Motor neuron (in vitro differentiated cells): ENCODE measurements at regions of chr17 and their contacts with region 1.

Region 1: DNA sequence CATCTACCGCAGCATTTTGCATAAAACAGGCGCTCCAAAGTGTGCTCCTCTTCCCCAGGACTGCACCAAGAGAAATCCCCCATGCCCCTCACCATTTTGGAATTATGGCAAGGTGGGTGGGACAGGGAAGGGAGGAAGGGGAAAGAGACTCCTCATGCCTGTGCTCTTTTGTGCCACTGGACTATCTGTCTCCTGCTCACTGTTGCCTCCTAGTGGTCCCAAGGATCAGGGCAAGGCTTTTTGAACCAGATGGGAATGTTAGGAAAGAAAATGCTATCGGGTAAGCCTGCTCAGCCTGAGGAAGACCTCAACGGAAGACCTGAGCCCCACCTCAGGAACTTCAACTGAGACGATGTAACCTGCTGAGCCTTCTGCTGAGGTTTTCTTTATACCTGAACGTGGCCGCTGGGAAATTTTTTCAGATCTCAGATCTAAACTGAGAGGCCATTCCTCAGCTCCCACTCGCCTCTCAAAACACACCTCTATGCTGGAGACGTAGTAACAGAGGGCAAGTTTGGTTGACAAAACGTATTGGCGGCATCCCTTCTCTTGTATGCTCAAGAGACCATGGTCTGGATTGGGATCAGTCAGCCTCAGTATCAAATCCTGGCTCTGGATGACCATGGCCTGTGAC is 58.3 kb downstream of the SPACA3 start:
- ATAC-seq: peak in 3 of 8 experiments; percentile 54 to 66 (median 54)
- H3K4me3 ChIP-seq: no peak overlapping the region
- H3K27ac ChIP-seq: no peak overlapping the region
- H3K4me1 ChIP-seq: peaks cover 4 to 7% of the 10 kb centered on the region in 2 donors

Region 2: GRCh38 chr17:32755045-32755805 is 294.7 kb before region 1 on chr17:
- in situ Hi-C with region 1: no loop called
- ATAC-seq: peak; percentile 77 to 95 (median 89)
- H3K4me3 ChIP-seq: no peak overlapping the region
- H3K27ac ChIP-seq: no peak overlapping the region
- H3K4me1 ChIP-seq: peaks cover 0 to 4% of the 10 kb centered on the region in 2 donors

Region 3: DNA sequence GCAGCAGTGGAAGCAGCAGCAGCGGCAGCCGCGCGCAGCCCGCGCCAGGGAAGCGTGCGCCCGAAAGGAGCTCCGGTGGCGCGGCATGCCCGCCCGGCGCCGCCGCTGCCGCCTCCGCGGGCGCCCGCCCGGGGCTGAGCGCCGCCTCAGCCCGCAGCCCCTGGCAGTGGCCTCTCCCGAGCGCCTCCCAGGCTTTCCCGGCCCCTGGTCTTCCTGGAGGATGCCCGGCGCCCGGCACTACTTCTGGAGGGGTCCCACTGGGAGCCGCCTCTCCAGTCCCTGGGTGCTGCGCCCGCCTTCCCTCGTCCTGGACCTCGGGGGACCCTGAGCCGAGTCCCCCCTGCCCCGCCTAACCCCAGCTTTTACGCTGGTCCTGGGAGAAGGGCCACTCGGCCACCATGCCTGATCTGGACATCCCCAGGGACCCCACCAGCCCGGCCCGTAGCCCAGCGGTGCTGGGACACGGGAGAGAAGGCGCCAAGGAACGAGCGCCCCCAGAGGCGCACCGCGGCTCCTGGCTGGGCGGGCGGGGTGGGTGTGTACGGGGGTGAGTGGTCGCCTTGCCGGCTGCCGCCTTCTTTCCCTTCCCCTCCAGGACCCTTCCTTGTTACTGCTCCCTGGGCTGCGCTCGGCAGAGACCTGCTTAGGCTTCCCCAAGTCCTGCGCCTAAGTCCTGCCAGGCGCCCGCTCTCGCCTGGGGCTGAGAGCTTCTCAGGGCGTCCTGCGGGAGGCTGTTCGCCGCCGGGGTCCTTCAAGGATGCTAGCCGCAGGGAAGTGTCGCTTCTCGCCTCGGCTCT is 242.5 kb after region 1 on chr17:
- in situ Hi-C with region 1: loop called in 1 of 9 experiments (anchors 25 kb)
- ATAC-seq: peak; percentile 40 to 81 (median 75)
- H3K4me3 ChIP-seq: peak overlapping the region; percentile 38 to 55 (median 43)
- H3K27ac ChIP-seq: no peak overlapping the region
- H3K4me1 ChIP-seq: peaks cover 0 to 12% of the 10 kb centered on the region in 2 donors

Region 4: DNA sequence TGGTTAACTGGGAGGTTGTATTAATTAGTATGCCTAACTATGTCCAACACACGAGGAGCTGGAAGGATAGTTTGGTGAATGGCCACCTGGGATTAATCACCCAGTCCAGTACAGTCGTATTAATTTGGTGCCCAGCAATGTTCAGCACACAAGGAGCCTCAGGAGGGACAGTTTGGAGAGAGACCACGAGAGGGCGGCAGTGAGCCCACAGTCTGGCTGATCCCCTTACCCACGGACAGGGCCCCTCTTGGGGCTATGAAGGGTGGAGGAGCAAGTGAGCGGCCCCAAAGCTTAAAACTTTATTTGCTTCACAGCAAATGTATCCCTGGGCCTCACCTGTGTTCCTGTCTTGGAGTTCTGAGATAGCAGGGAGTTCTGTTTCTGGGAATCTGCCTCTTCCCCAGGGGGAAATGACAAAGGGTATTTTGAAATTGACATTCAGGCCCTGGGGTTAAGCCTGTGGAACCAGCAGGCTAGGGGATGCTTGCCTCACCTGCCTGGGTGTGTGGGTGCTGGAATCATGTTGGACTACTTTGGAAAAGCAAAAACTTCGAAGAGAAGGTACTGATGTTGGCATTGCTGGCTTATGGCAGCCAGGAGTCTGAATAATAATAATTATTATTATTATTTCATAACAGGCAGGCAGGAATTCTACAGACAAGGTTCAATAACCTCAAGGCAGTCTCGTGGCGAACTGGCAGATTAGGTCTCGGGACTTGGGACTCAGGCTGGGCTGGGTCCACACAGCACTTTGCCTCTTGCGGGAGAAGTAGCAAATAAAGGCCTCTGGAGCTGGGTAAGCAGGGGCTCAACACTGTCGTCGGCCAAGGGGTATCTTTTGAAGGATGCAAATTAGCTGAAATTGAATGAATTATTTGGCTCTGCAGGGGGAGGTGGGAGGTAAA is 470.8 kb after region 1 on chr17:
- in situ Hi-C with region 1: loop called in 1 of 9 experiments (anchors 25 kb)
- ATAC-seq: peak in 6 of 8 experiments; percentile 63 to 92 (median 82)
- H3K4me3 ChIP-seq: no peak overlapping the region
- H3K27ac ChIP-seq: no peak overlapping the region
- H3K4me1 ChIP-seq: peaks cover 0 to 12% of the 10 kb centered on the region in 2 donors

Region 5: GRCh38 chr17:33674685-33675084 is 624.8 kb after region 1 on chr17:
- in situ Hi-C with region 1: loop called in 2 of 9 experiments (anchors 25 kb)
- ATAC-seq: peak; percentile 67 to 97 (median 88)
- H3K4me3 ChIP-seq: no peak overlapping the region
- H3K27ac ChIP-seq: no peak overlapping the region
- H3K4me1 ChIP-seq: no peaks in the 10 kb centered on the region